Mammary epithelial cell (primary cell): ENCODE measurements at regions of chr12 and their contacts with region 1.

Region 1: DNA sequence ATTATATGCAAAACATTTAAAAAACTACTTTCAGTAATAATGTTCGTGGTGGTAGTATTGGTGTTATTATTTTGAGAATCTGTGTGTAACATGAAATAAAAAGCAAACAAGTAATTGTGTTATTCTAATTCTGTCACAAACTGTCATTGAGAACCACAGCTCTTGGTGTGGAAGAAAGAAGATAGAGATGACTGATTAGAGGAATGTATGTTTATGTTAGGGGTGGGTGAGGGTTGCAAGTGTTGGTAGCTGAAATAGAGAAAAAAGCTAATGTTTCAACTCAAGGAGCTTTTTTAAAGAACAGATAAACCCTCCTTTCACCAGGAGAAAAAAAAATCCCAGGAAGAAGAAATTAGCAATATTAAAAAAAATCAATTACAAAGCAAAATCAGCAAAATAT is 18.3 kb downstream of the DNM1L start:
- DNase-seq: no peak
- H3K4me3 ChIP-seq: no peak overlapping the region
- H3K27ac ChIP-seq: no peak overlapping the region
- H3K4me1 ChIP-seq: no peaks in the 10 kb centered on the region
- H3K27me3 ChIP-seq: no peaks in the 10 kb centered on the region
- CTCF ChIP-seq: no peak

Region 2: GRCh38 chr12:30822385-30823155 is 1874.9 kb before region 1 on chr12:
- CTCF ChIA-PET with region 1: interaction called, 10 read pairs
- dilution Hi-C with region 1: no loop called
- in situ Hi-C with region 1: no loop called
- intact Hi-C with region 1: no loop called
- DNase-seq: peak; percentile 22
- H3K4me3 ChIP-seq: peak overlapping the region; percentile 18 to 36 (median 35)
- H3K27ac ChIP-seq: no peak overlapping the region
- H3K4me1 ChIP-seq: peaks cover 5% of the 10 kb centered on the region
- H3K27me3 ChIP-seq: no peaks in the 10 kb centered on the region
- CTCF ChIP-seq: peak in 1 of 2 donors; percentile 14

Region 3: DNA sequence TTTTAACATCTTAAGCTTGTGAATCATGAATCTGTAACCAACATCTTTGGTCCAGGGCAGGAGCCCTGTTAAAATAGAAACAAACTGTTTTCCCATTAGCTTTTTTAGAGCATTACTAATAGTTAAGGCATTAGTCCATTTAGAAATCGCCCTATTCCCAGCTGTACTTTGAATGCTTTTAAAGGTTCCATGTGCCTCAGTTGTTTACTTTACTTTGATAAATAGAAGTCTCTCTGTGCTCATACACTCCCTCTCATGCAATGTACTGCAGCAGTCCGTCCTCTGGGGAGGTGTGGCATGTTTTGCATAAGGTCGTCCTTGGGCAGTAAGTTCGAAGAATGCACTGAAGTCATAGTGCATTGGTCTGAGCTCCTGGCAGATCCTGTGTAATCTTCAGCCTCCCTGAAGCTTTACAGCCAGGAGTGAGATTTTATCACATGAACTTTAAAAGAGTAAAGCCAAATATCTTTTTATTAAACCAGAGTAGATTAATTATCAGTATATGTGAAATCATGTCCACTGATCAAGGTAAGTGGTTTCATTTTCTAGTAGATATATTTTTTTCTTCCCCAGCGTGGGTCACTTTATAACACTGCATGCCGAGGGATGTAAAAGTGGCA is 163.4 kb before region 1 on chr12:
- CTCF ChIA-PET with region 1: no interaction called
- dilution Hi-C with region 1: no loop called
- in situ Hi-C with region 1: no loop called
- intact Hi-C with region 1: no loop called
- DNase-seq: peak; percentile 73
- H3K4me3 ChIP-seq: peak overlapping the region in 2 of 3 experiments; percentile 43 to 45
- H3K27ac ChIP-seq: peak overlapping the region; percentile 50
- H3K4me1 ChIP-seq: peaks cover 36% of the 10 kb centered on the region
- H3K27me3 ChIP-seq: no peaks in the 10 kb centered on the region
- CTCF ChIP-seq: no peak

Region 4: DNA sequence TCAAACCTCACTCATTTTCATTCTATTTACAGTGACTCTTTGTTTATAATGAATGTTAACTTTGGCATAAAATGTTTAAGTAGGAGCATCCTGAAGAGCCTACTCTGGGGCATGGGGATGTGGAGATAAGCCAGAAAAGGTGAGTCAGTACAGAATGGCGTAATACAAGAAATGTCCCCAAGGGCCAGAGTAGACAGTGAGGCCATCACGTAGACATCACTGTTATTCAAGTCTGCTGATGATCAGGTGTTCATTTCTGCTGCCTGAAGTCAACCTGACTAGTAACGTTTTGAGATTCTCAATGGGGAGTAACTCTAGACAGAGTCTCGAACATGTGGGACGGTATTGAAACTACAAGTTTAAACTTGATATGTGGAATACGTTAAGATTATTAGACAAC is 246.8 kb after region 1 on chr12:
- CTCF ChIA-PET with region 1: no interaction called
- dilution Hi-C with region 1: no loop called
- in situ Hi-C with region 1: no loop called
- intact Hi-C with region 1: no loop called
- DNase-seq: peak; percentile 72
- H3K4me3 ChIP-seq: no peak overlapping the region
- H3K27ac ChIP-seq: no peak overlapping the region
- H3K4me1 ChIP-seq: peaks cover 11% of the 10 kb centered on the region
- H3K27me3 ChIP-seq: no peaks in the 10 kb centered on the region
- CTCF ChIP-seq: no peak